MCF 10A (cell line): ENCODE measurements at regions of chr9 and their contacts with region 1.

Region 1: GRCh38 chr9:94681508-94681907 is 42.2 kb upstream of the FBP1 start:
- DNase-seq: peak; percentile 76
- H3K4me3 Mint-ChIP-seq: no peak overlapping the region
- H3K27ac Mint-ChIP-seq: no peak overlapping the region
- H3K4me1 Mint-ChIP-seq: no peaks in the 10 kb centered on the region
- H3K27me3 Mint-ChIP-seq: no peaks in the 10 kb centered on the region
- CTCF ChIP-seq: peak; percentile 81

Region 2: DNA sequence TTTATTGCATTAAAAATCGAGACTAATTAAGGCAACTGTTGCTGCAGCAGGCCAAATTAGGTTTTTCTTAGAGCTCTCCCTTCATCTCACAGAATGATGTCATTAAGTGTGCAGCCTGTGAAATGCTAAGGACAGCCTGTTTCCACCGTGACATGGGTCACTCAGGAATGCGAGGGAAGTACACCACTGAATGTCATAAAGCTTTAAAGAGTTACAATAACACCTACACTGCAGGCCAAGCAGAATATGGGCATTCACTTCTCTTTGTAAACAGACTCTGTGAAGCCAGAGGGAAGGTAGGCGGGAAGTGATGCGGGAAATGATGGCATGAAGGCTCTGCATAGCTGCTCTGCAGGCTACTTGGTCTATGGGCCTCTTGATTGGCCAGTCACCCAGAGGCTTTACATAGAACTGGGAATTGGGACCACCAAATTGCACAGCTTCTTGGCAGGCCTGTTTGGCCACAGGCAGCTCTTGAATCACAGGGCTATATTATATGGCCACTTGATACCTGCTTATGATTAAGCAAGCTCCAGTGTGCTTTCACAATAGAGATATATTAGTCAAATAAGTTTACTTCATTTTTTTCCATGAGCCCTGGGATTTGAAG is 16.6 kb after region 1 on chr9:
- CTCF ChIA-PET with region 1: interaction called, 24 read pairs
- POLR2A ChIA-PET with region 1: interaction called, 6 read pairs
- intact Hi-C with region 1: no loop called
- DNase-seq: peak; percentile 29
- H3K4me3 Mint-ChIP-seq: no peak overlapping the region
- H3K27ac Mint-ChIP-seq: no peak overlapping the region
- H3K4me1 Mint-ChIP-seq: no peaks in the 10 kb centered on the region
- H3K27me3 Mint-ChIP-seq: peaks cover 3% of the 10 kb centered on the region
- CTCF ChIP-seq: no peak

Region 3: GRCh38 chr9:95157481-95158151 is 476.1 kb after region 1 on chr9:
- CTCF ChIA-PET with region 1: interaction called, 11 read pairs
- POLR2A ChIA-PET with region 1: no interaction called
- intact Hi-C with region 1: no loop called
- DNase-seq: peak; percentile 69
- H3K4me3 Mint-ChIP-seq: no peak overlapping the region
- H3K27ac Mint-ChIP-seq: no peak overlapping the region
- H3K4me1 Mint-ChIP-seq: peaks cover 12% of the 10 kb centered on the region
- H3K27me3 Mint-ChIP-seq: no peaks in the 10 kb centered on the region
- CTCF ChIP-seq: no peak

Region 4: DNA sequence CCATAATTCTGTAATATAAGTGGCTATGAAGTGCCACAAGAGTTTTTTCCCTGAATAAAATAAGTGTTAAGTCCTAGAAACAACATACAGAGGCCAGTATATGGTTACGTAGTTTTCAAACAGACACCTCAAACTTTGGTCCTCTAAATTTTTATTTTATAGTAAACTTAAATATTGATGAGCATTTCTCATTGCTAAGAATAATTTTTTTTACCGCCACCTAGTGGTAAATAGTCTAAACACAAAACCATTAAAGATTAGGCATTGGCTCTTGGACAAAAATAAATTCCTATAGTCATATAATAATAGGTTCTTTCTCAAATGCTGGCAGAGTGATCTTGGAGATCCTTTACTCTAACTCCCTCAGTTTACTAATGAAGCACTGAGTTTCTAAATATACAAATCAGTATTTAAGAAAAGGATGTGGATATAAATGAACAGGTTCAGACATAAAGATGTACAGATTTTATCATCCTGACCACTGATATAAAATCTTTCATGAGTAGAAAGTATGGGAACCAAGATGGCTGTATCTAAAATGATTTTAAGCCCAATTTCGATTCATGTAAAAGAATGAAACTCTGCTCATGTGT is 499.8 kb after region 1 on chr9:
- CTCF ChIA-PET with region 1: interaction called, 20 read pairs
- POLR2A ChIA-PET with region 1: no interaction called
- intact Hi-C with region 1: no loop called
- DNase-seq: peak; percentile 19
- H3K4me3 Mint-ChIP-seq: no peak overlapping the region
- H3K27ac Mint-ChIP-seq: peak overlapping the region; percentile 39
- H3K4me1 Mint-ChIP-seq: no peaks in the 10 kb centered on the region
- H3K27me3 Mint-ChIP-seq: no peaks in the 10 kb centered on the region
- CTCF ChIP-seq: peak; percentile 32